WTC11 (cell line): ENCODE measurements at regions of chr6 and their contacts with region 1.

Region 1: DNA sequence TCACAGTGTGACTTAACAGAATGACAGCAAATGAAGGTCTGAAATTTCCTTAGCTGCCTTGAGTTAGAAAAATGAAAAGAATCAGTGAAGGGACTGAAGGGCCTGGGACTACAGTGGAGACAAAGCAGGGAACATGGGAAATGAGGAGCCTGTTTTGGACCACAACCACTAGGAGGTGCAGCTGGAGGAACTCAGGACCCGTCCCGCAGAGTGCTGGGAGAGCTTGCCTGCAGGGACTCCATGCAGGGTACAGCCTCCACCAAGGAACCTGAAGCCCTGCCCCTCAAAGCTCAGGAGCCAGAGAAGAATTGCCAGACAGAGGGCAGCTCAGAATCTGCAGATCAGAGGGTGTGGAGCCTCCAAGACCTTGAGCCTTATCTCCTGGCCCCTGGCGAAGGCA is 50.7 kb downstream of the LRFN2 start:
- DNase-seq: peak; percentile 54
- ATAC-seq: peak; percentile 93
- H3K4me3 Mint-ChIP-seq: no peak overlapping the region
- H3K27ac Mint-ChIP-seq: no peak overlapping the region
- H3K4me1 Mint-ChIP-seq: peaks cover 22% of the 10 kb centered on the region
- H3K27me3 Mint-ChIP-seq: no peaks in the 10 kb centered on the region; the same call in 1 of the 2 replicates
- CTCF ChIP-seq: no peak

Region 2: GRCh38 chr6:39302669-39303424 is 1233.6 kb before region 1 on chr6:
- CTCF ChIA-PET with region 1: no interaction called
- POLR2A ChIA-PET with region 1: no interaction called
- DNase-seq: peak; percentile 95
- ATAC-seq: peak; percentile 86
- H3K4me3 Mint-ChIP-seq: peak overlapping the region; percentile 21
- H3K27ac Mint-ChIP-seq: no peak overlapping the region
- H3K4me1 Mint-ChIP-seq: peaks cover 17% of the 10 kb centered on the region
- H3K27me3 Mint-ChIP-seq: no peaks in the 10 kb centered on the region; the same call in 1 of the 2 replicates
- CTCF ChIP-seq: peak; percentile 59

Region 3: DNA sequence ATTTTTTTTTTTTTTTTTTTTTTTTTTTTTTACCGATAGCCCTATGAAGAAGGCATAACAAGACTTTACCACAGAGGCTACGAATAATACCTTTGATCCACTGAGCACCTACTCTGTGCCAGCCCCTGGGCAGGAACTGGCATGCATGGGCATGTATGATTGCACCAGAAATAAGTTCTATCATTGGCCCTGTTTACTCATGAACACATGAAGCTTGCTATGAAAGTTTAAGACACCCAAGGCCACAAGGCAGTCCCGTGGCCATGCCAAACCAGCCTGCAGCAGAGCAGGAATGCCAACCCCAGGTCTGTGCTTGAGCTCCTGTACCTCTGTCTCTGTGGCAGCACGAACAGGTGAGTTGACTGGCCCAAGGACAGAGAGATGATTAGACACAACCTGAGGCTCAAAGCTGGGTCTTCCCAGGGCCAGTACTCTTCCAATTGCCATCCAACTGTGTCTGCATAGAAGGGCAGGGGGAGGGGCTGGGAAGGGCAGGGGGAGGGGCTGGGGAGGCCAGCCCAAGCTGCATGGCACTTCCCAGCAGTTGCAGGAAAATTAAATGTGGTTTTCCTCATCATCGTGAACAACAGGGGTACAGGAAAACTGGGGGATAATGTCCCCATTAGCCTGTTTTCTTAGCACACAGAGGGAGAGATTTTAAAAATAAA is 12.8 kb before region 1 on chr6:
- CTCF ChIA-PET with region 1: interaction called, 12 read pairs
- POLR2A ChIA-PET with region 1: no interaction called
- DNase-seq: no peak
- ATAC-seq: peak; percentile 34; the same call in 1 of the 2 replicates
- H3K4me3 Mint-ChIP-seq: no peak overlapping the region; the same call in 1 of the 2 replicates
- H3K27ac Mint-ChIP-seq: no peak overlapping the region
- H3K4me1 Mint-ChIP-seq: peaks cover 57% of the 10 kb centered on the region
- H3K27me3 Mint-ChIP-seq: no peaks in the 10 kb centered on the region
- CTCF ChIP-seq: no peak

Region 4: GRCh38 chr6:40550202-40551101 is 14.0 kb after region 1 on chr6:
- CTCF ChIA-PET with region 1: interaction called, 22 read pairs
- POLR2A ChIA-PET with region 1: no interaction called
- DNase-seq: no peak
- ATAC-seq: peak; percentile 33; the same call in 1 of the 2 replicates
- H3K4me3 Mint-ChIP-seq: no peak overlapping the region
- H3K27ac Mint-ChIP-seq: no peak overlapping the region
- H3K4me1 Mint-ChIP-seq: peaks cover 54% of the 10 kb centered on the region
- H3K27me3 Mint-ChIP-seq: no peaks in the 10 kb centered on the region
- CTCF ChIP-seq: peak; percentile 44

Region 5: DNA sequence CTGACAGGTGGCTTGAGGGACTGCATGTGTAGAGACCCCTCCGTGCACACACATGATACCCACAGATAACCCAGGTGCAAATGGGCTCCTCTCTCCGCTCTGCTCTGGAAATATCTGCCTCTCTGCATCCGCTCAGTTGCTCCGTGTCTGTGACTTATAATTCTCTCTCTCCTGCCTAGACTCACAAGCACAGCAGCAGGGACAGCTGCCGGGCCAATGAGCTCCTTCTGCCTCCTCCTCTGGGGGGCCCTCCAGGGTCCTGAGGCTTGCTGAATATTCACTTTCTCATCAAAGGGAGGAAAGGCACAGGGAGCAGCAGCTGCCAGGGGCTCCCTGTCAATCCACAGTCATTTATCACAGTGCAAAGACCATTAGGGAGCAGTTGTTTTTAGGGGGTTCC is 26.7 kb after region 1 on chr6:
- CTCF ChIA-PET with region 1: interaction called, 13 read pairs
- POLR2A ChIA-PET with region 1: no interaction called
- DNase-seq: peak; percentile 27
- ATAC-seq: peak; percentile 86
- H3K4me3 Mint-ChIP-seq: no peak overlapping the region
- H3K27ac Mint-ChIP-seq: no peak overlapping the region
- H3K4me1 Mint-ChIP-seq: peaks cover 24% of the 10 kb centered on the region
- H3K27me3 Mint-ChIP-seq: no peaks in the 10 kb centered on the region
- CTCF ChIP-seq: no peak

Region 6: GRCh38 chr6:40713001-40713960 is 176.8 kb after region 1 on chr6:
- CTCF ChIA-PET with region 1: no interaction called
- POLR2A ChIA-PET with region 1: no interaction called
- DNase-seq: peak; percentile 27
- ATAC-seq: peak; percentile 86
- H3K4me3 Mint-ChIP-seq: no peak overlapping the region
- H3K27ac Mint-ChIP-seq: no peak overlapping the region
- H3K4me1 Mint-ChIP-seq: peaks cover 5% of the 10 kb centered on the region
- H3K27me3 Mint-ChIP-seq: no peaks in the 10 kb centered on the region; the same call in none of the 2 replicates
- CTCF ChIP-seq: no peak